Esophagus squamous epithelium (tissue), 5 donors: ENCODE measurements at regions of chr11 and their contacts with region 1.

Region 1: DNA sequence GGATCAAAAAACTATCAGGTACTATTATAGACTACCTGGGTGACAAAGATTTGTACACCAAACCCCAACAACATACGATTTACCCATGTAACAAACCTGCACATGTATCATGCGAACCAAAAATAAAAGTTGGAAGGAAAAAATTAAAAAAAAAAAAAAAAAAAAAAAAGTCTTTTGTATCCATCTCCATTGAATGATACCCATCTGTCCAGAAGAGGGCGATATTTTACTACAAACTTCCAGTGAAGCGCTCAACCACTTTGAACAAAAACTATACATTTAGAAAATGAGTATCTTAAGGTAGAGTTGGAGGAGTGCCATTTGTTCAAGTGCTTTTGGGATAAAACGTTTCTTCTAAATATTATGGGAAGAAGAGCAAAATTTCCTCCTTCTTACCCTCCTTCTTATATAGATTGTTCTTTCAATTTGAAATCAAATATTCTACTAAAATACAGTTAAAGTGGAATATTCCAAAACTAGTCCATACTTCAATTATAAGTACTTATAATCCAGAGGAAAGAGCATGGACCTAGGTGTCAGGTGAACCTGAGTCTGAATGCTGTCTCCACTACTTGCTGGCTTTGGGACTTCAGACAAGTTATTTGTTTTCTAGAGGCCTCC is 23.3 kb downstream of the ARL14EP start:
- DNase-seq: no peak
- H3K4me3 ChIP-seq: no peak overlapping the region
- H3K27ac ChIP-seq: no peak overlapping the region
- H3K4me1 ChIP-seq: no peaks in the 10 kb centered on the region
- H3K27me3 ChIP-seq: no peaks in the 10 kb centered on the region
- CTCF ChIP-seq: peak in 5 of 6 experiments; percentile 42 to 62 (median 60)
- POLR2A ChIP-seq: no peak

Region 2: GRCh38 chr11:30412499-30412898 is 66.3 kb after region 1 on chr11:
- intact Hi-C with region 1: no loop called
- DNase-seq: no peak
- H3K4me3 ChIP-seq: no peak overlapping the region
- H3K27ac ChIP-seq: no peak overlapping the region
- H3K4me1 ChIP-seq: no peaks in the 10 kb centered on the region
- H3K27me3 ChIP-seq: no peaks in the 10 kb centered on the region
- CTCF ChIP-seq: no peak
- POLR2A ChIP-seq: no peak

Region 3: DNA sequence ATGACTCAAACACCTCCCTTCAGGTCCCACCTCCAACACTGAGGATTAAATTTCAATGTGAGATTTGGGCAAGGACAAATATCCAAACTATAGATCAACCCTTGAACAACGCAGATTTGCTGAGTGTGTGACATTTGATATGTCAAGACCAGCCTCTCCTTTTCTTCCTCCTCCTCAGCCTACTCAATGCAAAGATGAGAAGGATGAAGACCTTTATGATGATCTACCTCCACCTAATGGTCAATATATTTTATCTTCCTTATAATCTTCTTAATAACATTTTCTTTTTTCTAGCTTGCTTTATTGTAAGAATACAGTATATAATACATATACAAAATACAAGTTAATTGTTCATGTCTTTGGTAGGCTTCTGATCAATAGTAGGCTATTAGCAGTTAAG is 307.4 kb after region 1 on chr11:
- intact Hi-C with region 1: loop called (anchors 10 kb)
- DNase-seq: no peak
- H3K4me3 ChIP-seq: no peak overlapping the region
- H3K27ac ChIP-seq: no peak overlapping the region
- H3K4me1 ChIP-seq: no peaks in the 10 kb centered on the region
- H3K27me3 ChIP-seq: no peaks in the 10 kb centered on the region
- CTCF ChIP-seq: peak in 1 of 6 experiments; percentile 5
- POLR2A ChIP-seq: no peak

Region 4: DNA sequence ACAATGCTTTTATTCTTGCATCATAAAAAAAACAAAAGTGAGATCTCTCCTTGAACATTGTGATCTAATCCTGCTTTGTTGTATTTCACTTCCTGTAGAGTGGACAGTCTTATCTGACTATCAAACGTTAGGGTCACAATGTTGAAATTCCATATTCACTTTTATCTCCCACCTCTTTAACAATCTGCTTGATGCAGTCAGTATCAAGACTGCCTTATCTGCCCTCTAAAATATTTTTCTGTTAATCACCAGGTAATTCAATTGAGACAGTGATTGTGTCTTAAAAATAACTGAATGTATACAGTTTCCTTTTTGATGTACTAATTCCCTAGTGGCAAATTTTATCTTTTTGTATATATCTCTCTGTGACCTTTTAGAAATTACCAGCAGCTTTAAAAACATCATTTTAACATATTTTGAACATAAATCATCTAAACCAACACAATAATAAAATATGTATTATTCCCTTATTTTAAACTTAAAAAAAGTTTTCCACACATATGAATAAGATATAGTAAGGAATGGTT is 383.1 kb after region 1 on chr11:
- intact Hi-C with region 1: no loop called
- DNase-seq: no peak
- H3K4me3 ChIP-seq: no peak overlapping the region
- H3K27ac ChIP-seq: no peak overlapping the region
- H3K4me1 ChIP-seq: no peaks in the 10 kb centered on the region
- H3K27me3 ChIP-seq: no peaks in the 10 kb centered on the region
- CTCF ChIP-seq: no peak
- POLR2A ChIP-seq: no peak

Region 5: GRCh38 chr11:30855383-30856006 is 509.3 kb after region 1 on chr11:
- intact Hi-C with region 1: loop called (anchors 10 kb)
- DNase-seq: no peak
- H3K4me3 ChIP-seq: no peak overlapping the region
- H3K27ac ChIP-seq: no peak overlapping the region
- H3K4me1 ChIP-seq: no peaks in the 10 kb centered on the region
- H3K27me3 ChIP-seq: no peaks in the 10 kb centered on the region
- CTCF ChIP-seq: peak in 4 of 6 experiments; percentile 1 to 55 (median 36)
- POLR2A ChIP-seq: no peak

Region 6: DNA sequence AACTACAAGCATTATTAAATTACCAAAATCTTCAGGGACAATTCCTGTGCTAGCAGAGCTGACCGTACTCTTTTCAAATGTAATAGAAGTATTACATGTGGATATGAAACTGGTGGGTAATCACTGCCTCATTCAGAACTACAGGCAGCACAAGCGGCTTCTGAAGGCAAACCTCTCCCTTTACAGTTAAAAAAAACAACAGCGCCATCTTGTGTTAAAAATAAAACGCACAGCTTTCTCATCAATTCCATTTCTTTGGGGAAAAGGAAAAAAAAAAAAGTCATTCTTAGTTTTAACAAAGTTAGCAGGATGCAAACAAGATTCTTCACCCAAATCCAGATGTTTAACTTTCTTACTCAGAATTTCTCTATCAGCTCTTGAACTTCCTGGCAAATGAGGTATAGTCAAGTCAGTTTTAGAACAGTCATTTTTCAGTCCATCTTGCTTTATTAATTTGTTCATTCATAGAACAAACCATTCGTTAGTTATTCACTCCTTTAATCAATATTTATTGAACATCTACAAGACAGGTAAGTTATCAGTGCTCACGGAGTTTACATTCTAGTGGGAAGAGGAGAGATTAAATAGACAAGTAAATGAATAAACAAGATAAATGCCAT is 571.8 kb after region 1 on chr11:
- intact Hi-C with region 1: loop called (anchors 5 kb)
- DNase-seq: no peak
- H3K4me3 ChIP-seq: no peak overlapping the region
- H3K27ac ChIP-seq: no peak overlapping the region
- H3K4me1 ChIP-seq: no peaks in the 10 kb centered on the region
- H3K27me3 ChIP-seq: peaks cover 0 to 18% (median 0%) of the 10 kb centered on the region in 4 donors
- CTCF ChIP-seq: peak; percentile 33 to 66 (median 60)
- POLR2A ChIP-seq: no peak